ENCODE measurements at regions of chr20 and their contacts with region 1.

Region 1: DNA sequence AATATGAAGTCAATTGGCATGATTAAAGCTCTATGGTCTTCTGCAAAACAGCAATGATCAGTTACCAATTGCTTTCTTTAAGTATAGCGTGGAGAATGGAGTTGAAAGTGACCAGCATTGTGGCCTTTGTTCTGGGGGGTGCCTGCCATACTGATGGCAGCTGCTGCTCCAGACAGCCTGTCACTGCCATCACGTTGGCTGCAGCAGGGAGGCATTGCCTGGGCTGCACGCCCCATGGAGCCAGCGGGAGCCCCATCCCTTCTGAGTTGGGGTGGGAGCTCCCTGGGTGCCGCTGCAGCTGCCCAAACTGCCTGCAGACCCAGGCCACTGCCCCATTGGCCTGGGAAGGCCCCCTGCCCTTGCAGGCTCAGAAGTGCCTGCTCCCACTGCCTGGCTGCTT is 306.8 kb upstream of the CDH4 start:
- DNase-seq: no peak
- ATAC-seq: no peak
- H3K4me3 ChIP-seq: no peak overlapping the region
- H3K27ac ChIP-seq: no peak overlapping the region
- H3K4me1 ChIP-seq: no peaks in the 10 kb centered on the region
- H3K27me3 ChIP-seq: peaks cover 0 to 10% (median 0%) of the 10 kb centered on the region in 9 donors
- CTCF ChIP-seq: no peak
- POLR2A ChIP-seq: no peak

Region 2: GRCh38 chr20:60765821-60766403 is 179.4 kb before region 1 on chr20:
- intact Hi-C with region 1: no loop called
- DNase-seq: no peak
- ATAC-seq: no peak
- H3K4me3 ChIP-seq: no peak overlapping the region
- H3K27ac ChIP-seq: no peak overlapping the region
- H3K4me1 ChIP-seq: no peaks in the 10 kb centered on the region
- H3K27me3 ChIP-seq: peaks cover 0 to 4% (median 0%) of the 10 kb centered on the region in 9 donors
- CTCF ChIP-seq: no peak
- POLR2A ChIP-seq: no peak

Region 3: DNA sequence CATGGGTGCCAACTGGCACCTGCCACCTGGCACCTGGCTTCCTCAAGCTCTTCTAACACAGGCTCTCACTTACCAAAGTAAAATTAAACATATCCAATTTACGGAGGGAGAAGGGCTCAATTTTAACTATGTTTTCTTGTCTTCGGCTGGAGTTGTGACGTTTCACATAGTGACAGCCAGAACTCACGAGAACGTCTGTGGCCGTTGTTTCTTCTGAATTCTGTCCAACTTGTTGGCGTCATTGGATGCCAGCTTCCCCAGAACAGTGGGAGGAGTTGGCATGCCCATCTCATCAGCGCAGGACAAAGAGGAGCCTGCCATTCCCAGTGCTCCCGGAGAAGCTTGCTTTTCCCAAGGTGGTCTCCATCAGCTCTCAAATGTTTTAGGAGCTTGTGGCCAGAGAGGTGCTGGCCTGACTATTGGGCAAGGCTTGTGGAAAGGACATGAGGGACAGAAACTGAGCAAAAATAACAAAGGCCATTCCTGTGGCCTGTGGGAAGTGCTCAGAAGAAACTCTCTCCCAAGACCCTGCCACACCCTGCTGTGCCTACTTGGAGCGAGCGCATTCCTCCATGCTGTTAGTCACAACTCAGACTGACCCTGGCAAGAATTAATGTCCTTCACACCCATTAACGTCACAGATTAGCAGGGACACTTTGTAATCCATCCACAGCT is 41.3 kb after region 1 on chr20:
- intact Hi-C with region 1: loop called in 1 of 10 experiments (anchors 2 kb)
- DNase-seq: no peak
- ATAC-seq: no peak
- H3K4me3 ChIP-seq: no peak overlapping the region
- H3K27ac ChIP-seq: no peak overlapping the region
- H3K4me1 ChIP-seq: no peaks in the 10 kb centered on the region
- H3K27me3 ChIP-seq: peaks cover 0 to 6% (median 0%) of the 10 kb centered on the region in 9 donors
- CTCF ChIP-seq: no peak
- POLR2A ChIP-seq: no peak

Region 4: GRCh38 chr20:61192342-61192950 is 247.2 kb after region 1 on chr20:
- intact Hi-C with region 1: no loop called
- DNase-seq: no peak
- ATAC-seq: no peak
- H3K4me3 ChIP-seq: no peak overlapping the region
- H3K27ac ChIP-seq: no peak overlapping the region
- H3K4me1 ChIP-seq: no peaks in the 10 kb centered on the region
- H3K27me3 ChIP-seq: peaks cover 0 to 47% (median 0%) of the 10 kb centered on the region in 9 donors
- CTCF ChIP-seq: no peak
- POLR2A ChIP-seq: no peak